PC-3 (cell line): ENCODE measurements at regions of chr20 and their contacts with region 1.

Region 1: DNA sequence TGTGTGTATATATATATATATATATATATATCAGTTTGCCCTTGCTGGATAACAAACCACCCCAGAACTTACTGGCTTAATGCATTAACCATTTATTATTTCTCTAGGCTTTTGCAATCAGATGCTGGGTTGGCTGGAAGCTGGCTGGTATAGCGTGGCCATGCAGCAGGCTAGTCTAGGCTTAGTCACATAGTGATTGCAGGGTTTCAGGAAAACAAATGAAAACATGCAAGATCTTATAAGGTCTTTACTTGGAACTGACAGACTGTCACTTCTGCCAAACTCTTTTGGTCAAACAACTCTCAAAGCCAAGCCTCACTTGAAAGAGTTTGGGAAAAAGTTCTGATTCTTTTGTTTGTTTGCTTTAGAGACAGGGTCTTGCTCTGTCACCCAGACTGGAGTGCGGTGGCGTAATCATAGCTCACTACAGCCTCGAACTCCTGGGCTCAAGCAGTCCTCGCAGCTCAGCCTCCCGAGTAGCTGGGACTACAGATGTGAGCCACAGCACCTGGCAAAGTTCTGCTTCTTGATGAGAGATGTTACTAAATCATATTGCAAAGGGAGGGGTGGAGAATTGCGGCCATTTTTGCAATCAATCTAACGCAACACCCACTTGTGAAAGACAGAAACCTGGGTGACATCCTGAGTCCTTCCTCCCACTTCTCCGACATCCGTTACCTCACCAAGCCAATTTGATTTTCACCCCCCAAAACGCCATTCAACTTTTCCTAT is 74.6 kb upstream of the RNF24 start:
- DNase-seq: no peak
- ATAC-seq: no peak
- H3K4me3 ChIP-seq: no peak overlapping the region
- H3K27ac ChIP-seq: no peak overlapping the region
- H3K4me1 ChIP-seq: peaks cover 3% of the 10 kb centered on the region; the same call in 1 of the 2 replicates
- H3K27me3 ChIP-seq: no peaks in the 10 kb centered on the region
- CTCF ChIP-seq: no peak

Region 2: DNA sequence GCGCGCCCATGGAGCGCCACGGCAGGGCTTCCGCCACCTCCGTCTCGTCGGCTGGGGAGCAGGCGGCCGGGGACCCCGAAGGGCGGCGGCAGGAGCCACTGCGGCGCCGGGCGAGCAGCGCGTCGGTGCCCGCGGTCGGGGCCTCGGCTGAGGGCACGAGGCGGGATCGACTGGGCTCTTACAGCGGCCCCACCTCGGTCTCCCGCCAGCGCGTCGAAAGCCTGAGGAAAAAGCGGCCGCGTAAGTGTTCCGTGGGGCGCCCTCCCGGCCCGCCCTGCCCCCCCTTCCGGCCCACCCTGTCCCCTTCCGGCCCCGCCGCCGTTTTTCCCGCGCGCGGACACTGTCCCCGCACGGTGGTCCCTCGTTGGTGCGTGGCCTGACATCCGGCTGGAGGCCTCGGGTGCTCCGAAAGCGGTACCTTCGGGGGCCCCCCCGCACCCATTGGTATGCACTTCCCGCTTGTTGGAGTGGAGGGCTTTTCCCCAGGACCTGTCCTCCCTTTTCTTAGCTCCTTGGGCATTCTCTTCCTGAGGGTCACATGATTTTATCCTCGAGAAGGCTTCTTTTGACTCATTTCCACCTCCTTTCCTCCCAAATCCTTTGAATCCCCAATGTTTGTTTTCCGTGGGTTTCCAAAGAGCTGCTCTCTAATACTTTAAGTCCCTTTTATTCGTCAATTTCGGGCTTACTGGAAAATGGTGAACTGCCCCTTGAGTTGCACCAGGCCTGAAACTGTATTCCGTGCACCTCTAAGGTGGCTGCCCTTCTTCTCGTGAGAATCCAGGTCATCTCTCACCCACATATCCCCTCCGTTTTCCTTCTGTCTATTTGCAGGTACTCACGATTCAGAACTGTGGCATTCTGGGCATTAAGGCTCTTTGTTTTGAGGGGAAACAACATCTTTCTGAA is 200.2 kb before region 1 on chr20:
- CTCF ChIA-PET with region 1: interaction called, 4 read pairs
- POLR2A ChIA-PET with region 1: no interaction called
- intact Hi-C with region 1: loop called (anchors 5 kb)
- DNase-seq: peak; percentile 27
- ATAC-seq: peak; percentile 2
- H3K4me3 ChIP-seq: peak overlapping the region; percentile 79
- H3K27ac ChIP-seq: peak overlapping the region; percentile 50
- H3K4me1 ChIP-seq: peaks cover 39% of the 10 kb centered on the region
- H3K27me3 ChIP-seq: no peaks in the 10 kb centered on the region
- CTCF ChIP-seq: no peak

Region 3: GRCh38 chr20:3932681-3933080 is 157.2 kb before region 1 on chr20:
- CTCF ChIA-PET with region 1: interaction called, 14 read pairs
- POLR2A ChIA-PET with region 1: no interaction called
- intact Hi-C with region 1: no loop called
- DNase-seq: no peak
- ATAC-seq: peak; percentile 23
- H3K4me3 ChIP-seq: peak overlapping the region; percentile 45; the same call in 1 of the 2 replicates
- H3K27ac ChIP-seq: no peak overlapping the region
- H3K4me1 ChIP-seq: peaks cover 8% of the 10 kb centered on the region; the same call in 1 of the 2 replicates
- H3K27me3 ChIP-seq: no peaks in the 10 kb centered on the region
- CTCF ChIP-seq: no peak

Region 4: DNA sequence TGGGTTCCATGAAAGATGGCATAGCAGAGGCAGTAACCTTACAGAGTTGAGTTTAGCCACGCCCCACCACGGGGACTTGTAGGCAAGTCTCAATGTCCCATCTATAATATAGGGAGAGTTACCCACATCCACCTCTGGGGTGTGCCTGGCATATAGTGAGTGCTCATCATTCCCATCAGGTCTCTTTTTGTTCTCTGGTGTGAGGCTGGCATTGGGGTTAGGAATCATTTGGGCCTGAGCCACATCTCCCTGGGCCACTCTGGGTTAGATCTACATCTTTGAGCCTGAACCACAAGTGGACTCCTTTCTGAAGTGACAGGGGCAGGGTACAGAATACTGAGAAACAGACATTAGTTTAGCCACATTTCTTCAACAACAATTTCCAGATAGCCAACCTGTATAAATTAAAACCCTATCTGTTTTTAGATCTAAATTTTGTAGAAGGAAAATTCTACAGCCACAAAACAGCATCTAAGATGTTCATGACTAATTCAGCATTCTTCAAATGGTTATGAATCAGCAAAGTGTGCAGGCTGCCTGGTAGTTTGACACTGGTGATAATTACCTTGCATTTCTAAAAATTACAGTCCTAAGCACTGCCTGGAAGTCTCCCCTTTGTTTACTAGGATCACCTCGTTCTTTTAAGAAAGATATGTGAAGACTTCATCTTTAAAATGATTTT is 94.7 kb before region 1 on chr20:
- CTCF ChIA-PET with region 1: no interaction called
- POLR2A ChIA-PET with region 1: no interaction called
- intact Hi-C with region 1: no loop called
- DNase-seq: peak; percentile 36
- ATAC-seq: peak; percentile 66
- H3K4me3 ChIP-seq: no peak overlapping the region
- H3K27ac ChIP-seq: no peak overlapping the region
- H3K4me1 ChIP-seq: peaks cover 11% of the 10 kb centered on the region
- H3K27me3 ChIP-seq: no peaks in the 10 kb centered on the region
- CTCF ChIP-seq: no peak